IMR-90 (cell line): ENCODE measurements at regions of chr14 and their contacts with region 1.

Region 1: GRCh38 chr14:69129264-69129880 is 23.5 kb downstream of the DCAF5 start:
- DNase-seq: peak; percentile 88
- ATAC-seq: peak; percentile 82
- H3K4me3 ChIP-seq: no peak overlapping the region
- H3K27ac ChIP-seq: no peak overlapping the region
- H3K4me1 ChIP-seq: peaks cover 9% of the 10 kb centered on the region
- H3K27me3 ChIP-seq: no peaks in the 10 kb centered on the region
- CTCF ChIP-seq: peak; percentile 95
- POLR2A ChIP-seq: no peak
- RAD21 ChIP-seq: peak; percentile 92

Region 2: DNA sequence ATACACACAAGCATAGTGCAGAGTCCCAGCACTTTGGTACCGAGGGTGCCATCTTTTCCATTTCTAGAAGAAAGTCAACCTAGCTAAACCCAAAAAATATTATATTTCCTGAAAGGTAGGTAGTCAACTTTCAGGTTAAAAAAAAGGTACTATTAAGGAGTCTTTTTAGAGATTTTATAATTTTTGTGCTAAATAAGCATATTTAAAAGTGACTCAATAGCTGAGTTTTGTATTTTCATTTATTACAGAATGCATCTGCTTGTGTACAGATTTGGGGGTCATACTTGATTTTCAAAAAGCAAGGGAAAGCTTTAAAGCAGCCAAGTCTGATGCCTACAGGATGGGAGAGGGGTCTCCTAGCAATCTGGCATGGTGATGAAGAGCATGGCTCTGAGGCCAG is 11.1 kb before region 1 on chr14:
- CTCF ChIA-PET with region 1: interaction called, 11 read pairs
- POLR2A ChIA-PET with region 1: no interaction called
- dilution Hi-C with region 1: no loop called
- in situ Hi-C with region 1: no loop called
- intact Hi-C with region 1: no loop called
- DNase-seq: no peak
- ATAC-seq: no peak
- H3K4me3 ChIP-seq: no peak overlapping the region
- H3K27ac ChIP-seq: no peak overlapping the region
- H3K4me1 ChIP-seq: no peaks in the 10 kb centered on the region; the same call in 1 of the 2 replicates
- H3K27me3 ChIP-seq: no peaks in the 10 kb centered on the region
- CTCF ChIP-seq: no peak
- POLR2A ChIP-seq: no peak
- RAD21 ChIP-seq: no peak

Region 3: DNA sequence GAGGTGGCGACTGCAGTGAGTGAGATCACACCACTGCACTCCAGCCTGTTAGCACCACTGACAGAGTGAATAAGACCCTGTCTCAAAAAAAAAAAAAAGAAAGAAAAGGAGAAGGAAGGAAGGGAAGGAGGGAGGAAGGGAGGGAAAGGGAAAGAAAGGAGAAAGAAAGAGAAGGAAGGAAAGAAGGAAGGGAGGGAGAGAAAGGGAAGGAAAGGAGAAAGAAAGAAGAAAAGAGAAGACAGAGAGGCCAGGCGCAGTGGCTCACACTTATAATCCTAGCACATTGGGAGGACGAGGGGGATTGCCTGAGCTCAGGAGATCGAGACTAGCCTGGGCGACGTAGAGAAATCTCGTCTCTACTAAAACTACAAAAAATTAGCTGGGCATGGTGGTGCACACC is 10.4 kb after region 1 on chr14:
- CTCF ChIA-PET with region 1: interaction called, 3 read pairs
- POLR2A ChIA-PET with region 1: interaction called, 15 read pairs
- dilution Hi-C with region 1: no loop called
- in situ Hi-C with region 1: no loop called
- intact Hi-C with region 1: no loop called
- DNase-seq: no peak
- ATAC-seq: no peak
- H3K4me3 ChIP-seq: no peak overlapping the region
- H3K27ac ChIP-seq: no peak overlapping the region
- H3K4me1 ChIP-seq: peaks cover 8% of the 10 kb centered on the region
- H3K27me3 ChIP-seq: no peaks in the 10 kb centered on the region
- CTCF ChIP-seq: no peak
- POLR2A ChIP-seq: no peak
- RAD21 ChIP-seq: no peak

Region 4: DNA sequence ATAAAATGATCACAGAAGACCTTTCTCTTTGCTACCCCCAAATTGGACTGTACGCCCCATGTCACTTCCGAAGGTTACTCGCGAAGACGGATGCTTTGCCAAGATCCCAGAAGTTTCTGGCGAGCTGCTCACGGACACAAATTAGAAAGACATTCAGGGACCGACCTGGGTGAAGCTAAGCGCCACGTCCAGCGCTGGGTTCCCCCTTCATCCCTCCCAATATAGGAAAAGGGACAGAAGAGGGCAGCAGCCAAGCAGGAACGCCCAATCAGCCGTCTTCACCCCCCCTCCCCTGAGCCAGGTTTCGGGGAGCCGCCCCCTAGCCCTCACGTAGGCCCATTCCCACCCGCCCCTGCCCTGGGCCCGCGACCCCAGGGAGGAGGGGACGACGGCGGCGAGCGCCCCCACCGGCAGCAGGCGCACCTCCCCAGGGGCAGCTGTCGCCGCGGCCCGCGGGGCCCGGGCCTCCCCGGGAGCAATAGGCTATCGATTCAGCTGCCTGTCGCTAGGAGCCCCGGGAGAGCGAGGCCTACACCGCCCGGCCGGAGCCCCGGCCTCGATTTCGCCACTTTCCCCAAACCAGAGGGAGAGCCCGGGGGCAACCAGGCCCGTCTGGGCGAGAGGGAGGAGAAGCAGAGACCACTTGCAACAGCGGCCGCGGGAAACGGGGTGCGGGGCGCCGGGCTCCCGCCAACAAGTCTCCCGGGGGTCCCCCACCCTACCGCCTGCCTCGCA is 22.1 kb after region 1 on chr14:
- CTCF ChIA-PET with region 1: interaction called, 5 read pairs
- POLR2A ChIA-PET with region 1: no interaction called
- dilution Hi-C with region 1: no loop called
- in situ Hi-C with region 1: no loop called
- intact Hi-C with region 1: loop called (anchors 1 kb)
- DNase-seq: peak; percentile 67
- ATAC-seq: peak; percentile 60
- H3K4me3 ChIP-seq: peak overlapping the region; percentile 88
- H3K27ac ChIP-seq: peak overlapping the region; percentile 95
- H3K4me1 ChIP-seq: peaks cover 8% of the 10 kb centered on the region
- H3K27me3 ChIP-seq: no peaks in the 10 kb centered on the region
- CTCF ChIP-seq: peak; percentile 58
- POLR2A ChIP-seq: no peak
- RAD21 ChIP-seq: no peak; the same call in none of the 2 replicates

Region 5: GRCh38 chr14:69363055-69363454 is 233.7 kb after region 1 on chr14:
- CTCF ChIA-PET with region 1: interaction called, 3 read pairs
- POLR2A ChIA-PET with region 1: no interaction called
- dilution Hi-C with region 1: no loop called
- in situ Hi-C with region 1: no loop called
- intact Hi-C with region 1: loop called (anchors 1 kb)
- DNase-seq: peak; percentile 33
- ATAC-seq: peak; percentile 99
- H3K4me3 ChIP-seq: no peak overlapping the region
- H3K27ac ChIP-seq: no peak overlapping the region
- H3K4me1 ChIP-seq: no peaks in the 10 kb centered on the region
- H3K27me3 ChIP-seq: peaks cover 2% of the 10 kb centered on the region
- CTCF ChIP-seq: peak; percentile 61
- POLR2A ChIP-seq: no peak
- RAD21 ChIP-seq: peak; percentile 79